ENCODE measurements at regions of chr9 and their contacts with region 1.

Region 1: DNA sequence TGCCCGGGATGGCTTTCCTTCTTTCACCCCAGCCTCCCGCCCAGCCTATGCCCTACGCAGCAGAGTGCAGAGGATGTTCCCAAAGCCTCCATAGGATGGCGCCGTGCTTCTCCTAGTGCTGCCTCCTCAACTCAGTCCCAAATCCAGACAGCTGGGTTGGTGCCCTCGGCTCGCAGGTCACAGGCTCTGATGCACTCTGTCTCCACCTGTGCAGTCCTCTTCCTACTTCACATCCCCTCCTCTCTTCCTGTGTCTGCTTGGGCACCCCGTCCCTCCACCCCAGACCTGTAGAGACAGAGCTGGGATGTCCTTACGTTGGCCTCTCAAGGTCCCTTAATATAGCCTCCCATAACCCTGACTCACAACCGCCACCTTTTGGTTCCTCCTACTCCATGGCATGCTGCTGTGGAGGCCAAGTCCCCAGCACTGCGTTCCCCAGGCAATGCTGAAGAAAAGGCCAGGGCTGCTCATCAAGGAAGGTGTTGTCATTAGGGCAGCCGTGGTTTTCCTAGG is 314.4 kb downstream of the GADD45G start:
- DNase-seq: peak; percentile 68
- ATAC-seq: peak; percentile 76
- H3K4me3 Mint-ChIP-seq: no peak overlapping the region
- H3K27ac Mint-ChIP-seq: no peak overlapping the region
- H3K4me1 Mint-ChIP-seq: peaks cover 23% of the 10 kb centered on the region
- H3K27me3 Mint-ChIP-seq: peaks cover 10% of the 10 kb centered on the region
- CTCF ChIP-seq: peak; percentile 35

Region 2: DNA sequence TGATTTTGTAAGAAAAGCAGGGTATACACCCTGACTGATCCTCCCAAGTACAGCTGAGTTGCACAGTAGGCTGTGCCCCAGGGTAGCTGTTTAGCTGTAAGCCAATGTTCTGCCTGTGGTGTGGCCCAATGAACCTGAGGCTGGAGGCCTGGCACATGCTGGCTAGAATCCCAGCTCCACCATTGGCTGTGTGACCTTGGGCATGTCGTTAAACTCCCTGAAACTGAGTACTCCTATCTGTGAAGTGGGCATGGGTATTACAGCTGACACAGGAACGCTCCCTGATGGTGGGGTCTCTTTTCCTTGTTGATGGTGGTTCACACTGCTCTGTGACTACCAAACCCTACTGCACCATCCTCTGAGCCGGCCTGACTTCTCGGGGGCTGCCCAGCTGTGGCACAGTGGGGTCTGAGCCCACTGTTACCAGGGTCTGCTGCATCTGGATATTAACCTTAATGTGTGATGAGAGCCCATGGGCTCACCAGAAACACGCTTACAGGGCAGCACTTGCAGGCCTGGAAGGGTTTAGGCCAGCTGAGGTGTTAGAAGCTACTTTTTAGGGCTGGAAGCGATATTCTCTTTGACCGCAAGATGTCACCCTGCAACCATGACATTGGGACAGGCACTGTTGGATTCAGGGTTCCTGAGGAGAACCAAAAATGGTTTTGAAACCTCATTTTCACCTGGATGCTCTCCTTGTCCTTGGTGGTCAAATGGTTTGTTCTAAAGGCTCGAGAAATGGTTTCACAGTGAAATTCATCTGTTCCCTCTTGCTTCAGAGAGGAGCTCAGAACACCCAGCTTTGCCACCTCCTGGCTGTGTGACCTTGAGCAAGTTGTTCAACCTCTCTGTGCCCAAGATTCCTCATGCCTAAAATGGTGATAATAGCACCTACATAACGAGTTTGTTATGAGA is 321.3 kb before region 1 on chr9:
- CTCF ChIA-PET with region 1: interaction called, 28 read pairs
- POLR2A ChIA-PET with region 1: no interaction called
- intact Hi-C with region 1: loop called (anchors 2 kb)
- DNase-seq: peak; percentile 73
- ATAC-seq: peak; percentile 56
- H3K4me3 Mint-ChIP-seq: no peak overlapping the region
- H3K27ac Mint-ChIP-seq: no peak overlapping the region
- H3K4me1 Mint-ChIP-seq: no peaks in the 10 kb centered on the region
- H3K27me3 Mint-ChIP-seq: peaks cover 2% of the 10 kb centered on the region
- CTCF ChIP-seq: peak; percentile 85

Region 3: DNA sequence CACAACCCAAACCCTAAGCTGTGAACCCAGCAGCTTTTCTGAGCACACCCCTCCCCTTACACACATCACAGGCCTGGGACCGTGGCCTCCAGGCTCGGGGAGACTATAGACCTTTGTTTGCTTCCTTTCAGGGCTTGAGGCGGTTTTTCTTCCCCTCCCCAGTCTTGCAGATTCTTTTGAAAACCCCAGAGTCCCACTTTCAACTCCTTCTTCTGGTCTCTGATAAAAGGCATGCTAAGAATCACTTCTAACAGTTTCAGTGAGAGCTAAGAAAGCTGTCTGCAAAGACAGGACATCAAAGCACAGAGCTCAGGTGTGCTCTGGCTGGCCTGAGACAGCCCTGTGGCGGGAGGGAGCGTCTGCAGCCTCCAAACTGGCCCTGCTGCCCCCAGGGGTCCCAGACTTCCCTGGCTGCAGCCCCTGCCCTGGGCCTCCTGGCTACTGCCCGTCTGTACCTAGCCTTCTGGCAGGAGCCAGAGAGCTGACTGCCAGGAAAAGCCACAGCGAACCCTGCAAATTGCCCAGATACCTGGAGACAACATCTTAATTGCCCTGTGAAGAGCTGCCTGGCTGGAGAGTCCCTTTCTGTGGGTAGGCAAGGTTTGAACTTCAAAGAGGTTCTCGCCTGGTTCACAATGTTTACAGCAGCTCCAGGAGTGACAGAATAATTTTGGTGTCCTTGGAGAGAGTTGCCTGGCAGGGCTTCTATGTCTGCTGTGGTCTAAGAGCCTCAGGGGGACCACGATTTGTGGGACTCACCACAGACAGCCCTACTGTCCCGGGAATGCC is 175.5 kb before region 1 on chr9:
- CTCF ChIA-PET with region 1: interaction called, 10 read pairs
- POLR2A ChIA-PET with region 1: no interaction called
- intact Hi-C with region 1: no loop called
- DNase-seq: peak; percentile 80
- ATAC-seq: peak; percentile 77
- H3K4me3 Mint-ChIP-seq: peak overlapping the region; percentile 27
- H3K27ac Mint-ChIP-seq: peak overlapping the region; percentile 87
- H3K4me1 Mint-ChIP-seq: peaks cover 70% of the 10 kb centered on the region
- H3K27me3 Mint-ChIP-seq: peaks cover 5% of the 10 kb centered on the region
- CTCF ChIP-seq: no peak

Region 4: DNA sequence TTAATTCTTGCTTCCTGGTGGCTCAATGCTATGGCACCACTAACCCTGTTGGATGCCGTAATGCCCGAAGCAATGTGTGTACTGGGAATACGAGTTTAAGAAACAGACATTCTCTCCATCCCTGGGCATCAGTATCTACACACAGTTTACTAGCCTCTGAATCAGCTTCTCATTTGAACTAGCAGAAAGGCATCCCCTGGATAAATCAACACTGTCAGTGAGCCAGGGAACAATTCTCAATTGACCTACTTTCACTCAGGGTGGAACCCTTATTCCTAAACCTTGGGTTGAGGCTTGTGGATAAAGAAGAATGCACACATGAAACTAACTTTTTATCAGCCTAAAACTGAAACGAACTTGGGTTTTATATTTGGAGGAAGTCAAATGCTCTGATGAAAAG is 16.6 kb after region 1 on chr9:
- CTCF ChIA-PET with region 1: interaction called, 15 read pairs
- POLR2A ChIA-PET with region 1: no interaction called
- intact Hi-C with region 1: no loop called
- DNase-seq: no peak
- ATAC-seq: no peak
- H3K4me3 Mint-ChIP-seq: no peak overlapping the region
- H3K27ac Mint-ChIP-seq: no peak overlapping the region
- H3K4me1 Mint-ChIP-seq: peaks cover 6% of the 10 kb centered on the region
- H3K27me3 Mint-ChIP-seq: peaks cover 16% of the 10 kb centered on the region
- CTCF ChIP-seq: no peak

Region 5: DNA sequence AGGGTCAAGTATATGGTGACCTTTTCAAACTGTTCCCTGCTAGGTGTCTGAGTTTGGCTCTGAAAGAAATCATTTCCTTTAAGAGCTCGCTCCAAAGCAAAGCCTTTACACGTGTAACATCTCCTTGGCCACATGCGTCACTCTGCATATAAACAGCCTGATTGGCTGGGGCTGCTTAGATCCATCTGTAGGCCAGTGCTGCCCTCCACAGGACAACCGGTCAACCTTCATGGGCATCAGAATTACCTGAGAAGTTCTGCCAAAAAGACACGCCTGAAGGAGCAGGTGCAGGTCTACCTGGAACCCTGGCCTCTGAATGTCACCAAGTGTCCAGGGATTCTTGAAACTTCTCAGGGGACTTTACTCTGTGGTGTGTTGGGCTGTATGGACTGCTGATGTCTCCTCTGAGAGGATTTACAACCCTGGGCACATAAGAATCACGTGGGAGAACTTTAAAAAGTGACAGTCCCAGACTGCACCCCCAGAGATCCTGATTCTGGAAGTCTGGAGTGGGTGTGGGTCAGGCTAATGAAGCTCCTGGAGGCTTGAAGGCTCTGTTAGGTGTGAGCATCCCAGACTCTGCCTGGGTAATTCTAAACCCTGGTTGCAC is 183.2 kb after region 1 on chr9:
- CTCF ChIA-PET with region 1: interaction called, 18 read pairs
- POLR2A ChIA-PET with region 1: no interaction called
- intact Hi-C with region 1: loop called (anchors 5 kb)
- DNase-seq: peak; percentile 87
- ATAC-seq: peak; percentile 100
- H3K4me3 Mint-ChIP-seq: no peak overlapping the region
- H3K27ac Mint-ChIP-seq: no peak overlapping the region
- H3K4me1 Mint-ChIP-seq: peaks cover 6% of the 10 kb centered on the region
- H3K27me3 Mint-ChIP-seq: peaks cover 4% of the 10 kb centered on the region
- CTCF ChIP-seq: peak; percentile 72

Measured in activated CD8-positive, alpha-beta T cell treated with anti-CD3 and anti-CD28 coated beads for 36 hours (primary cell).